ENCODE measurements at regions of chr2 and their contacts with region 1.

Region 1: DNA sequence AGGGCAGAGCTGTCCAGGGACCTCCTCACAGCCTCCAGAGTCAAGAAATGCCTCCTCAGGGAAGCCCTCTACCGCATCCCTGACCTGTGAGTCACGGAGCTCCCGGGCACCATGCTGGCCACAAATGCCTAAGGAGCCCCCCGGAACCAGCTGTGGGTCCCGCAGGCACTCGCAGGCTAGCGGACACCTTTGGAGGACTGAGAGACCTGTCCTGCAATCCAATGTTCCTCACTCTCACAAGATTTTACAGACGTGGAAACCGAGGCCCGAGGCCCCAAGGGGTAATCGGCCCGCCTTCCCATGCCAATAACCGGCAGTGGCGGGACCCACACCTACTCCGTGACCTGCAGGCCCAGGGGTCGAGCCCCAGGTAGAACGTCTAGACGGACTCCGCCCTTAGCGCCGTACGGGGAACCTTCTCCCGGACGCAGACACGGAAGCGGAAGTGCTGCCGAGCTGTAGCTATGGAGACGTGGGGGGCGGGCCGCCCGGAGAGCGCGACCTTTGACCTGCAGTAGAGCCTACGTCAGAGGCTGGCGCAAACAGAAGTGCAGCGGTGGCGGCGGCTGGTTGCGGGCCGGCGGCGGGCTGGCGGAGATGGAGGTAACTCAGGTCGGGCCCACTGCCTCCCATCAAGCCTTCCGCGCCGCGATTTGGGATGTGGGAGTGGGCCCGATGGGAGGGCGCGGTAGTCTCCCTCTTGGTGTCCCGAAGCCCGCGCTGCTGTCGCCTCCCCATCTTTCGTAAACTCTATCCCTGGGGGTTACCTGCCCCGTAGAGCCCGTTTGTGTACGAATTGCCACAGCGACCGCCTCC is at the start of gene GCC2:
- DNase-seq: peak; percentile 92 to 98 (median 96)
- ATAC-seq: peak; percentile 98
- H3K4me3 ChIP-seq: peak within 1 kb of the TSS; percentile 99
- H3K4me3 Mint-ChIP-seq: peak within 1 kb of the TSS; percentile 93 to 100 (median 97)
- H3K27ac ChIP-seq: peak within 1 kb of the TSS; percentile 97
- H3K27ac Mint-ChIP-seq: peak within 1 kb of the TSS; percentile 97 to 100 (median 98)
- H3K4me1 ChIP-seq: peaks cover 15 to 23% of the 10 kb centered on the region in 2 donors
- H3K4me1 Mint-ChIP-seq: peaks cover 18 to 54% (median 47%) of the 10 kb centered on the region in 7 donors
- H3K27me3 ChIP-seq: no peaks in the 10 kb centered on the region
- H3K27me3 Mint-ChIP-seq: no peaks in the 10 kb centered on the region
- total RNA-seq, gene GCC2: 45.3 to 229 (median 117) TPM

Region 2: DNA sequence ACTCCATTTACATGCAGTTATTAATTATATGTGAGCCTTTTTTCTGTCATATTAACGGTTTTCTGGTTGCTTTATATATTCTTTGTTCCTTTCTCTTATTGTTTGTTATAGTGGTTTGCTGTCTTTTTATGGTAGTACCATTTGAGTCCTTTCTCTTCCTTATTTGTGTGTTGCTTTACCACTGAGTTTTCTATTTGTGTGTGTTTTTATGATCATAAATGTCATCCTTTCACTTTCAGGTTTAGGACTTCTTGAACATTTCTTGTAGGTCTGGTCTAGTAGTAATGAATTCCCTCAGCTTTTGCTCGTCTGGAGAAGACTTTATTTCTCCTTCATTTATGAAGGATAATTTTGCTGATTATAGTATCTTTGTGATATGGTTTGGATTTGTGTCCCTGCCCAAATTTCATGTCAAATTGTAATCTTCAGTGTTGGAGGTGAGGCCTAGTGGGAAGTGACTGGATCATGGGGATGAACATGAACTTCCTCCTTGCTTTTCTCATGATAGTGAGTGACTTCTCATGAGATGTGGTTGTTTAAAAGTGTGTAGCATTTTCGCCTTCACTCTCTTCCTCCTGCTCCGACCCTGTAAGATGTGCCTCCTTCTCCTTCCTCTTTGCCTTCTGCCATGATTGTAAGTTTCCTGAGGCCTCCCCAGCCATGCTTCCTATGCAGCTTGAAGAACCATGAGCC is 11.6 kb after region 1 on chr2:
- CTCF ChIA-PET with region 1: no interaction called
- POLR2A ChIA-PET with region 1: interaction called, 6 read pairs
- intact Hi-C with region 1: loop called in 1 of 2 experiments (anchors 2 kb)
- DNase-seq: no peak
- ATAC-seq: no peak
- H3K4me3 ChIP-seq: no peak overlapping the region
- H3K4me3 Mint-ChIP-seq: peak overlapping the region in 4 of 10 donors; percentile 2 to 28 (median 22)
- H3K27ac ChIP-seq: no peak overlapping the region
- H3K27ac Mint-ChIP-seq: peak overlapping the region in 6 of 9 donors; percentile 14 to 69 (median 29)
- H3K4me1 ChIP-seq: peaks cover 0 to 3% of the 10 kb centered on the region in 2 donors
- H3K4me1 Mint-ChIP-seq: peaks cover 27 to 82% (median 74%) of the 10 kb centered on the region in 7 donors
- H3K27me3 ChIP-seq: no peaks in the 10 kb centered on the region
- H3K27me3 Mint-ChIP-seq: no peaks in the 10 kb centered on the region

Region 3: DNA sequence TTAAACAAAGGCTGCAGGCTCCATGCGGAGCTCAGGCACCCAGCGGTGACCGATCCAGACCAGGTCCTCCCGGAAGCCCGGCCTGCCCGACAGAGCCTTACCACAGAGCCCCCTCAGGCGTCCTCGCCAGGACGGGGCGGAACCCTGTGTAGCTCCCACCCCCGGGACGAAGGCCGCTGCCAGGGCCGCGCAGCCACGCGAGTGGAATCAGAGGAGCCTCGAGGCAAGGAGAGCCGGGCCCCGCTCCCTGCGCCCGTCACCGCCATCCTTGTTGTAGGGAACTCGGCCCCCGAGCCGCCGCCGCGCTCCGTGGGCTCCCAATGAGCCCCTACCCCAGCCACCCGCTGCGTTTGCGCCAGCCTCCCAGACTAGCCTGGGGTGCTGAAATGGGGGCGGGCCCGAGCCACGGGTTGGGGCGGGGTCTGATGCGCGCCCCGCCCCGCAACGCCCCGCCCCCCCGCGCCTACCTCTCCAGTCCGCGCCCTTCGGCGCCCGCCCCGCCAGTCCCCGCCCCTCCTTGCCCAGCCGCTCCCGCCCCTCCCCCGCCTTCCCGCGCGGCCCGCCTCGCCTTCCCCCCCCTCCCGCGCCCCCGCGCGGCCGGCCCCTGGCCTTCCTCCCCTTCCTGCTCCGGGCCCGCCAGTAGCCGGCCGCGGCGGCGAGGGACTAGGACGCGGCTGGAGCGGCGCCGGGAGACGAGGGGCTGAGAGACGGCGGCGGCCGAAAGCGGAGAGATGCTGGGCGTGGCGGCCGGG is 85.1 kb after region 1 on chr2 and contains the start of gene LIMS1:
- CTCF ChIA-PET with region 1: no interaction called
- POLR2A ChIA-PET with region 1: interaction called, 6 read pairs
- intact Hi-C with region 1: loop called (anchors 1 kb)
- DNase-seq: peak; percentile 69 to 85 (median 79)
- ATAC-seq: peak; percentile 98
- H3K4me3 ChIP-seq: peak within 1 kb of the TSS; percentile 93
- H3K4me3 Mint-ChIP-seq: peak within 1 kb of the TSS; percentile 86 to 99 (median 95)
- H3K27ac ChIP-seq: peak within 1 kb of the TSS; percentile 76
- H3K27ac Mint-ChIP-seq: peak within 1 kb of the TSS; percentile 34 to 96 (median 89)
- H3K4me1 ChIP-seq: peaks cover 3 to 9% of the 10 kb centered on the region in 2 donors
- H3K4me1 Mint-ChIP-seq: peaks cover 20 to 59% (median 28%) of the 10 kb centered on the region in 7 donors
- H3K27me3 ChIP-seq: no peaks in the 10 kb centered on the region
- H3K27me3 Mint-ChIP-seq: no peaks in the 10 kb centered on the region
- total RNA-seq, gene LIMS1: 25.3 to 75.3 (median 49.9) TPM

Region 4: DNA sequence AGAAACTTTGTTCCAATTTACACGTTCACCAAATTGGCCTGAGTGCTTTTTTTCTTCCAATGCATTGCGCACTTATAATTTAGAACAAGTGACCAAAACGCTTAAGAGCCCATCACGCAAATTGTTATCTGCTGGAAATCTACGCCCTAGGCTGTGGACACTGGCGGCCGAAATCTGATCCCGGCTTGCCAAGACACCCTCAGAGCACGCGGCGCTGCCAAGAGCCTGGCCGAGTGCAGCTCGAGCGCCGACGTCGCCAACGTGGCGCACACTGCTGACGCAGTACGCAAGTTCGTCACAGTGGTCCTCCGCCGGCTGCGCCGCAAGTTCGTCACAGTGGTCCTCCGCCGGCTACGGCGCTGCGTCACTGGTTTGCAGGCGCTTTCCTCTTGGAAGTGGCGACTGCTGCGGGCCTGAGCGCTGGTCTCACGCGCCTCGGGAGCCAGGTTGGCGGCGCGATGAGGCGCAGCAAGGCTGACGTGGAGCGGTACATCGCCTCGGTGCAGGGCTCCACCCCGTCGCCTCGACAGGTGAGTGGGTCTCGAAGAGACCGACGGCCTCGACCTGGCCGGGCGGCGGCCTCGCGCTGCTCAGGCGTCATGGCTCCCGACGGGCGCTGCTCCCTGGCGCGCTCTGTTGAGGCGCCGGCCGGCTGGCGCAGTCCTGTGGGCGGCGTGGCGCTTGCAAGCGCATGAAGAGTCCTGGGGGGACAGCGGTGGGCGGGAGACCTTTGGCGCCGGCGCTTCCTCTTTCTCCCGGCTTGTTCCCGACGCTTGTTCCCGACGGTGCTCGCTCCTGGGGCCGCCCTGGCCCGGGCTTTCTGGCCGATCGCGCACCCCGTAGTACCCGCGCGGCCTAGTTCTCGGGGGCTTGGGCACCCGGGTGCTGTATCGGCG is 270.5 kb after region 1 on chr2 and contains the start of gene RANBP2:
- CTCF ChIA-PET with region 1: no interaction called
- POLR2A ChIA-PET with region 1: interaction called, 8 read pairs
- intact Hi-C with region 1: loop called (anchors 1 kb)
- DNase-seq: peak; percentile 86 to 95 (median 93)
- ATAC-seq: peak; percentile 98
- H3K4me3 ChIP-seq: peak within 1 kb of the TSS; percentile 97
- H3K4me3 Mint-ChIP-seq: peak within 1 kb of the TSS; percentile 94 to 98 (median 97)
- H3K27ac ChIP-seq: peak within 1 kb of the TSS; percentile 96
- H3K27ac Mint-ChIP-seq: peak within 1 kb of the TSS; percentile 97 to 99 (median 99)
- H3K4me1 ChIP-seq: peaks cover 5 to 6% of the 10 kb centered on the region in 2 donors
- H3K4me1 Mint-ChIP-seq: peaks cover 14 to 43% (median 31%) of the 10 kb centered on the region in 7 donors
- H3K27me3 ChIP-seq: no peaks in the 10 kb centered on the region
- H3K27me3 Mint-ChIP-seq: no peaks in the 10 kb centered on the region
- total RNA-seq, gene RANBP2: 63.4 to 118 (median 88.6) TPM

Region 5: DNA sequence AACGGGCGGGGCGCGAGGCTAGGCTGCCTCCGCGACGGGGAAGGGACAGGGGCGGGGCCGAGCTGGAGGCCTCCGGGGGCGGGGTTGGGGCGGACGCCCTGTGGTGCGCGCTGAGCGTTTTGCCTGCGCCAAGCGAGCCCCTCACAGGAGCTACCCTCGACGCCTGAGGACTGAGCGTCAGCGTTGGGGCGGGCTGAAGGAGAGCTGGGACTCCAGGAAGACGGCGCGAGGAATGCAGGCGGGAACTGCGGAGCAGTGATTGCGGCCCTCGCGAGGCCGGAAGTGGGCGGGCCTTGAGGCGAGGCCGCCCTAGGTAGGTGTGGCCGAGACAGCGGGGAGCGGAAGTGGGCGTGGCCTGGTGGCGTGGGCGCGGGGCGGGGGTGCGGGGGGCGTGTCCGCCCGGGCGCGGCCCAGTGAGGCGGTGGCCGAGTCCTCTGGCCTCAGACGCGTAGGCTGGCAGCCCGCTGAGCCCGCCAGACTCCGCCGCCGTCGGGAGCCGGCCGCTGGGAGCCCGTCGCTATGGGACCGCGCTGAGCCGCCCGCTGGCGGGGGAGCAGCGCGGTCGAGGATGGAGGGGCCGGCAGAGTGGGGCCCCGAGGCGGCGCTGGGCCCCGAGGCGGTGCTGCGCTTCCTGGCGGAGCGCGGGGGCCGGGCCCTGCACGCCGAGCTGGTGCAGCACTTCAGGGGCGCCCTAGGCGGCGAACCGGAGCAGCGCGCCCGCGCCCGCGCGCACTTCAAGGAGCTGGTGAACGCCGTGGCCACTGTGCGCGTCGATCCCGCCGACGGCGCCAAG is 1165.2 kb after region 1 on chr2 and contains the starts of genes SEPTIN10 and SOWAHC:
- CTCF ChIA-PET with region 1: no interaction called
- POLR2A ChIA-PET with region 1: no interaction called
- intact Hi-C with region 1: loop called in 1 of 2 experiments (anchors 2 kb)
- DNase-seq: peak; percentile 71 to 86 (median 84)
- ATAC-seq: peak; percentile 96
- H3K4me3 ChIP-seq: peak within 1 kb of the TSS; percentile 64
- H3K4me3 Mint-ChIP-seq: peak within 1 kb of the TSS; percentile 85 to 96 (median 90)
- H3K27ac ChIP-seq: no peak within 1 kb of the TSS
- H3K27ac Mint-ChIP-seq: peak within 1 kb of the TSS in 8 of 9 donors; percentile 27 to 89 (median 80)
- H3K4me1 ChIP-seq: no peaks in the 10 kb centered on the region
- H3K4me1 Mint-ChIP-seq: peaks cover 0 to 26% (median 16%) of the 10 kb centered on the region in 7 donors
- H3K27me3 ChIP-seq: peaks cover 3 to 23% of the 10 kb centered on the region in 2 donors
- H3K27me3 Mint-ChIP-seq: peaks cover 58 to 83% (median 62%) of the 10 kb centered on the region in 5 donors
- total RNA-seq, gene SEPTIN10: 0.94 to 5.9 (median 2.0) TPM
- total RNA-seq, gene SOWAHC: 0.17 to 1.2 (median 0.94) TPM

Measured in naive thymus-derived CD4-positive, alpha-beta T cell (primary cell).